Heart left ventricle (tissue), 16 donors: ENCODE measurements at regions of chr4 and their contacts with region 1.

Region 1: GRCh38 chr4:26410385-26411293 is 79.6 kb downstream of the CCKAR start:
- DNase-seq: peak in 1 of 5 donors; percentile 30
- ATAC-seq: peak in 1 of 4 donors; percentile 66
- H3K4me3 ChIP-seq: no peak overlapping the region
- H3K27ac ChIP-seq: no peak overlapping the region
- H3K4me1 ChIP-seq: peaks cover 0 to 21% (median 16%) of the 10 kb centered on the region in 12 donors
- H3K27me3 ChIP-seq: no peaks in the 10 kb centered on the region
- CTCF ChIP-seq: peak; percentile 42 to 78 (median 70)
- POLR2A ChIP-seq: no peak

Region 2: GRCh38 chr4:25913851-25914669 is 496.6 kb before region 1 on chr4 and contains the start of gene SMIM20:
- intact Hi-C with region 1: loop called in 1 of 10 experiments (anchors 5 kb)
- DNase-seq: peak; percentile 92 to 95 (median 94)
- ATAC-seq: peak; percentile 97 to 99 (median 98)
- H3K4me3 ChIP-seq: peak within 1 kb of the TSS; percentile 45 to 94 (median 76)
- H3K27ac ChIP-seq: peak within 1 kb of the TSS; percentile 60 to 95 (median 90)
- H3K4me1 ChIP-seq: peaks cover 2 to 23% (median 15%) of the 10 kb centered on the region in 12 donors
- H3K27me3 ChIP-seq: no peaks in the 10 kb centered on the region
- CTCF ChIP-seq: peak in 1 of 12 donors; percentile 5
- POLR2A ChIP-seq: peak in 1 of 2 donors; percentile 69
- total RNA-seq, gene SMIM20: 27.4 to 50.8 (median 37.2) TPM

Region 3: DNA sequence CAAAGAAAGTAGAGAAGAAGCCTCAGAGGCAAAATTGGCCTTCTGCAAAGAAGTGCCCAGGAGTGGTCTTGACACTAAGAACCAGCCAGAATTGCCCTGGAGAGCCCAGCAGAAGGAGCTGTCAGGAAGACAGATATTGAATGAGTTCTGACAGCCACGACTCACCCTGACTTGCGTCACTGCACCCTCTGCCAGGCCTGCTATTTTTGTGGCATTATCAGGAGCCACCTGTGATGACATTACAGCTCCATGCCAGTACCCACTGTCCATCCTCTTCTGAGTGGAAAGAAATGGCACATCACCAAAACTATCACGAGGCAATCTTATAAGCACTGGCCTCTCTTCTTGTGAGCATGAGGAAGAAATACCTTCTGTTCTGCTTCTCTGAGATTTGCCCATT is 428.9 kb before region 1 on chr4:
- intact Hi-C with region 1: loop called in 7 of 10 experiments (anchors 5 to 10 kb)
- DNase-seq: peak in 2 of 5 donors; percentile 68 to 84
- ATAC-seq: peak; percentile 88 to 97 (median 95)
- H3K4me3 ChIP-seq: no peak overlapping the region
- H3K27ac ChIP-seq: no peak overlapping the region
- H3K4me1 ChIP-seq: no peaks in the 10 kb centered on the region
- H3K27me3 ChIP-seq: no peaks in the 10 kb centered on the region
- CTCF ChIP-seq: no peak
- POLR2A ChIP-seq: no peak

Region 4: GRCh38 chr4:25993395-25994185 is 417.0 kb before region 1 on chr4:
- intact Hi-C with region 1: loop called in 8 of 10 experiments (anchors 2 to 10 kb)
- DNase-seq: peak in 4 of 5 donors; percentile 33 to 67 (median 40)
- ATAC-seq: peak in 3 of 4 donors; percentile 68 to 75 (median 71)
- H3K4me3 ChIP-seq: no peak overlapping the region
- H3K27ac ChIP-seq: peak overlapping the region in 2 of 12 donors; percentile 34
- H3K4me1 ChIP-seq: peaks cover 0 to 25% (median 0%) of the 10 kb centered on the region in 12 donors
- H3K27me3 ChIP-seq: no peaks in the 10 kb centered on the region
- CTCF ChIP-seq: peak in 7 of 12 donors; percentile 9 to 34 (median 13)
- POLR2A ChIP-seq: no peak

Region 5: GRCh38 chr4:26081795-26082498 is 328.7 kb before region 1 on chr4:
- intact Hi-C with region 1: loop called (anchors 2 to 10 kb)
- DNase-seq: no peak
- ATAC-seq: peak; percentile 43 to 66 (median 55)
- H3K4me3 ChIP-seq: no peak overlapping the region
- H3K27ac ChIP-seq: peak overlapping the region in 1 of 12 donors; percentile 55
- H3K4me1 ChIP-seq: peaks cover 0 to 40% (median 0%) of the 10 kb centered on the region in 12 donors
- H3K27me3 ChIP-seq: peaks cover 0 to 3% (median 0%) of the 10 kb centered on the region in 9 donors
- CTCF ChIP-seq: peak; percentile 49 to 76 (median 69)
- POLR2A ChIP-seq: no peak